ENCODE measurements at regions of chr10 and their contacts with region 1.

Region 1: DNA sequence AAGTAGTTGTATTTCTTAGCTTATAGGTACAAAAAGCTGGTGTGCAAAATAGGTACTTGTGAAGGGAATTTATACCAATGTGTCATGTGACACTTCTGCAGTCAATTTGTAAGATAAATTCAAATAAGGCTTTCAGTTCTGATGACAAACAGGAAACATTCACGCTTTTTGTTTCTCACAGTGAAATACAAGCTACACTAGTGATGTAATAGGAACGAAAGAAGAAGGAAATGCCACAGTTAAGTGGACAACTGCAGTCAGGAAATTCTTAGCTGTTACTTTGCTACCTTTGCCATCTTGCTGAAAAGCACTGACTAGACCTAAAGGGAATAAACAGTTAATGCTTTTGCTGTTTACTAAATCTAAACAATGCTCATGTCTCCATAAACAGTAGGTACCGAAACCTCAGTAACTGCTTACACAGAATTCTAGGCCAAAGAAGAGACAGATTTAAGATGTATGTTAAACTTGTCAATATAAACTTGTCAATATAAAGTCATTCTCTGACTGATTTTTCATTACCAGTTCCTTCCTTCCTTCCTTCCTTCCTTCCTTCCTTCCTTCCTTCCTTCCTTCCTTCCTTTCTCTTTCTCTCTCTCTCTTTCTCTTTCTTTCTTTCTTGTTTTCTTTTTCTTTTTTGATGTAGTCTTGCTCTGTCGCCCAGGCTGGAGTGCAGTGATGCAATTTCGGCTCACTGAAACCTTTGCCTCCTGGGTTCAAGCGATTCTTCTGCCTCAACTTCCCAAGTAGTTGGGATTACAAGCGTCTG is 10.1 kb downstream of the OTUD1 start:
- DNase-seq: no peak
- H3K4me3 ChIP-seq: no peak overlapping the region
- H3K27ac ChIP-seq: no peak overlapping the region
- H3K4me1 ChIP-seq: no peaks in the 10 kb centered on the region
- H3K27me3 ChIP-seq: no peaks in the 10 kb centered on the region
- CTCF ChIP-seq: no peak

Region 2: GRCh38 chr10:23270531-23270930 is 178.5 kb before region 1 on chr10:
- CTCF ChIA-PET with region 1: no interaction called
- dilution Hi-C with region 1: no loop called
- in situ Hi-C with region 1: no loop called
- intact Hi-C with region 1: no loop called
- DNase-seq: no peak
- H3K4me3 ChIP-seq: no peak overlapping the region
- H3K27ac ChIP-seq: no peak overlapping the region
- H3K4me1 ChIP-seq: no peaks in the 10 kb centered on the region
- H3K27me3 ChIP-seq: no peaks in the 10 kb centered on the region
- CTCF ChIP-seq: no peak

Region 3: GRCh38 chr10:23351914-23352755 is 96.9 kb before region 1 on chr10:
- CTCF ChIA-PET with region 1: no interaction called
- dilution Hi-C with region 1: loop called (anchors 5 kb)
- in situ Hi-C with region 1: no loop called
- intact Hi-C with region 1: no loop called
- DNase-seq: peak; percentile 79
- H3K4me3 ChIP-seq: no peak overlapping the region
- H3K27ac ChIP-seq: peak overlapping the region; percentile 38
- H3K4me1 ChIP-seq: peaks cover 15% of the 10 kb centered on the region
- H3K27me3 ChIP-seq: no peaks in the 10 kb centered on the region
- CTCF ChIP-seq: no peak

Region 4: GRCh38 chr10:23927576-23928325 is 478.8 kb after region 1 on chr10:
- CTCF ChIA-PET with region 1: no interaction called
- dilution Hi-C with region 1: no loop called
- in situ Hi-C with region 1: no loop called
- intact Hi-C with region 1: no loop called
- DNase-seq: no peak
- H3K4me3 ChIP-seq: no peak overlapping the region
- H3K27ac ChIP-seq: no peak overlapping the region
- H3K4me1 ChIP-seq: no peaks in the 10 kb centered on the region
- H3K27me3 ChIP-seq: no peaks in the 10 kb centered on the region
- CTCF ChIP-seq: no peak